Heart left ventricle (tissue), 16 donors: ENCODE measurements at regions of chr2 and their contacts with region 1.

Region 1: DNA sequence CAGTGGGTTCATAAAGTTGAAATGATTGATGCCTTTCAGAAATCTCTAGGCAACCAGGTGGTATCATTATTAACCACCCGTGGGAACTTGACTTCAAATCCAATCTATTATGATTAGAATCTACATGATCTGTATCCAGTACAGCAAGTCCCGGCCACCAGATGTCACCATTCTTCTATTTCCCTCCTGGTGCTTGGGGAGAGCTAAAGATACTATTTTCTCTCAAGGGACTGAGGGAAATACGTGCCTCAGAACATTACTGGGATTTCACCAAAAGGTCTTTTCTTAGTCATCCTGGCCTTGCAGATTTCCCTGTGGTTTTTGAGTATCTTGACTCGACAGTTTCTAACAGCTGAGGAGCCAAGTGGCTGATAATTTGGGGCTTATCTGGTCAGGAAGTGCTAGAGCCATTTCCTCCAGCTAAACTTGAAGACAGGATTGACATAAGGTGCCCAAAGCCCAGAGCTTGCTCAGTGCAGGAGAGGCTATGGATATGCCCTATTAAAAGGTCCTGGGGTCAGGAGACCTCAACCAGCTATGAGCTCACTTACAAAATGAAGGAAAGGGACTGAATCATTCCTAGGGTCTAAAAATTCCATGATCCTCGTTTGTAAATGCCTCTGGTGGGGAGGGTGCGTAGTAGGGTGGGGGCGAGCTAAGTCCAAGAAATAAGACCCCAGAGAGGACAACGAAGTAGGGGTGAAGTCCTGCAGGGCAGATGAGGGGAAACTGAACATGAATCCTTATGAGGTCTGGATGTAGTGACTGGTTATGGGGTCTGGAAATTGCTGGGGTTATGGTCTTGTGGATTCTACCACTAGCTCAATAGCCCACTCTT is 135.4 kb upstream of the MGAT5 start:
- DNase-seq: peak; percentile 84 to 91 (median 86)
- ATAC-seq: peak; percentile 42 to 72 (median 53)
- H3K4me3 ChIP-seq: peak overlapping the region in 3 of 12 donors; percentile 5 to 99 (median 73)
- H3K27ac ChIP-seq: peak overlapping the region; percentile 33 to 96 (median 94)
- H3K4me1 ChIP-seq: peaks cover 10 to 43% (median 34%) of the 10 kb centered on the region in 12 donors
- H3K27me3 ChIP-seq: no peaks in the 10 kb centered on the region
- CTCF ChIP-seq: peak; percentile 67 to 94 (median 84)
- POLR2A ChIP-seq: no peak

Region 2: DNA sequence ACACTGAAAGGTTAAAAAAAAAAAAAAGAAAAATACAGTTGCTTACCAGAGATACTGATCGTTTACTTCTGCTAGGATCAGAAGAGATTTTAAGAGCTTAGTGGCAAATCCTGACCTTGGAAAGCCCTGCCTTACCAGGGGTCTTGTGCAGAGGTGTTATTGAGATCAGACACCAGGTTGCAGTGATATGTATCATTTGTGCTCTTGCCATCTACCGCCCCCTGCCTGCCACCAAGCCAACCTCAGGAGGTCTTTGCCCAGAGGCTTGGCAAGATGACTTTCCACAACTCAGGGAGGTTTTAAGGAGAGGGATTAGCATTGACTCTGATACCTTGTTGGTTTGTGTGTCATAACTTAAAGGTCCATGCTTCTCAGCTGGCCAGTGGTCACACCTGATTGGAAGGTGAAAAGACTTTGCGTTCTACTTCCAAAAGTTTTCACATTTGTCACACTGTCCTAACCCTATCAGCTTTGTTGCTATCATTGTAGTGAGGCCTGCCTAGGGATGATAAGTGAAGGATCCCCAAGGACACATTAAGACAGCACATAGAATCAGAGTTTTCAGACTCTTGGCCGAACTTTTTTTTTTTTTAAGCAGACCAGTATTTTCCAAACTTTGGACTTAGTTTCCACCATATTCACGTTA is 89.2 kb after region 1 on chr2:
- intact Hi-C with region 1: loop called in 9 of 10 experiments (anchors 5 kb)
- DNase-seq: peak in 4 of 5 donors; percentile 52 to 60 (median 58)
- ATAC-seq: peak; percentile 75 to 83 (median 77)
- H3K4me3 ChIP-seq: no peak overlapping the region
- H3K27ac ChIP-seq: peak overlapping the region in 7 of 12 donors; percentile 9 to 45 (median 17)
- H3K4me1 ChIP-seq: peaks cover 9 to 65% (median 49%) of the 10 kb centered on the region in 12 donors
- H3K27me3 ChIP-seq: no peaks in the 10 kb centered on the region
- CTCF ChIP-seq: peak; percentile 54 to 78 (median 65)
- POLR2A ChIP-seq: no peak

Region 3: GRCh38 chr2:134261398-134262131 is 143.1 kb after region 1 on chr2:
- intact Hi-C with region 1: loop called in 3 of 10 experiments (anchors 2 to 5 kb)
- DNase-seq: no peak
- ATAC-seq: peak in 3 of 4 donors; percentile 43 to 59 (median 52)
- H3K4me3 ChIP-seq: no peak overlapping the region
- H3K27ac ChIP-seq: peak overlapping the region; percentile 55 to 90 (median 80)
- H3K4me1 ChIP-seq: peaks cover 16 to 74% (median 61%) of the 10 kb centered on the region in 12 donors
- H3K27me3 ChIP-seq: no peaks in the 10 kb centered on the region
- CTCF ChIP-seq: no peak
- POLR2A ChIP-seq: no peak

Region 4: DNA sequence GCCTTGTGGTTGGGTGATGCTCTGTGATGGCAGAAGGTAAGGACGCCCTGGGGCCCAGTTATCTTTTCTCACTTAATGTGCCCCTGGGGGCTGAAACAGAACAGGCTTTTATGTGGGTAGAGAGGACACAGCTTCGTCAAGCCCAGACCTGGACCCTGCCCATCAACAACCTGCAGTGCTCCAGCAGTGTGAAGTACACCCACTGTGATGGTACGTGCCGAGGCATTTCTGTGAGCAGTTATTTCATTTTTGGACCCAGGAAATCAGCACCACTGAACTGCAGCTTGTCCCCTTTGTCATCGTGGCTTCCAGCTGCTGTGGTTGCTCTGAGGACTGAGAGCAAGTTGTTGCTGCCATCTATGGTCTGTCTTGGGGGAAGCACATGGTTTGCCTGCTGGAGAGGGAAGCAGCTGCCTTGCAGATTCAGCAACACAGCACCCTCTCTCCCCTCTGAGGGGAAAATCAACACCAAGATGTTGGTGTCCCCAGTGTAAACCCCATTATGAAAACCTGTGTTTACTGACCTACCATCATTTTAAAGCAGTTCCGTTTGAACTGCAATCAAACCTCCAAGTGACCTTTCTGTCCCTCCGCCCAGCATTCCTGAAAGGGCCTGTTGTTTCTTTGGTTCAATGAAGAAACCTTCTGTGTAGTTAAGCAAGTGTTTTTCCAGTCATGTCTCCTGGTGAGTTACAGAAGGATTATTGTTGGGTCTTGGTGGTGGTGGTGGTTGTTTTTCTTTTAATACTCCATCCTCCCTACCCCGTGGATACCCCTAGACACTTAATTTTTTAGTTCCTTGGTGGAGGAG is 293.5 kb after region 1 on chr2:
- intact Hi-C with region 1: loop called (anchors 1 to 5 kb)
- DNase-seq: peak in 4 of 5 donors; percentile 77 to 82 (median 78)
- ATAC-seq: peak; percentile 92 to 95 (median 94)
- H3K4me3 ChIP-seq: no peak overlapping the region
- H3K27ac ChIP-seq: peak overlapping the region in 9 of 12 donors; percentile 12 to 64 (median 42)
- H3K4me1 ChIP-seq: peaks cover 0 to 50% (median 38%) of the 10 kb centered on the region in 12 donors
- H3K27me3 ChIP-seq: no peaks in the 10 kb centered on the region
- CTCF ChIP-seq: peak; percentile 48 to 82 (median 71)
- POLR2A ChIP-seq: no peak

Region 5: GRCh38 chr2:134454931-134455330 is 336.4 kb after region 1 on chr2:
- intact Hi-C with region 1: loop called in 3 of 10 experiments (anchors 1 to 2 kb)
- DNase-seq: peak in 2 of 5 donors; percentile 13 to 40
- ATAC-seq: no peak
- H3K4me3 ChIP-seq: no peak overlapping the region
- H3K27ac ChIP-seq: no peak overlapping the region
- H3K4me1 ChIP-seq: peaks cover 0 to 16% (median 0%) of the 10 kb centered on the region in 12 donors
- H3K27me3 ChIP-seq: no peaks in the 10 kb centered on the region
- CTCF ChIP-seq: no peak
- POLR2A ChIP-seq: no peak